Activated T-helper 1 cell treated with anti-CD3 and anti-CD28 coated beads, Interleukin-12 subunit alpha, Interleukin-12 subunit beta, Interleukin-2, Interleukin-4 antibody, amounts not matched to agents 30 ng/mL and 10 ng/mL and 1 ng/mL, durations not matched to agents 14 hours and 24 hours and 36 hours (primary cell): ENCODE measurements at regions of chr5 and their contacts with region 1.

Region 1: GRCh38 chr5:132495667-132496190 is 5.2 kb upstream of the IRF1 start:
- DNase-seq: peak; percentile 72
- H3K4me3 Mint-ChIP-seq: peak overlapping the region; percentile 93
- H3K27ac Mint-ChIP-seq: peak overlapping the region; percentile 90
- H3K4me1 Mint-ChIP-seq: peaks cover 80% of the 10 kb centered on the region
- H3K27me3 Mint-ChIP-seq: peaks cover 1% of the 10 kb centered on the region

Region 2: DNA sequence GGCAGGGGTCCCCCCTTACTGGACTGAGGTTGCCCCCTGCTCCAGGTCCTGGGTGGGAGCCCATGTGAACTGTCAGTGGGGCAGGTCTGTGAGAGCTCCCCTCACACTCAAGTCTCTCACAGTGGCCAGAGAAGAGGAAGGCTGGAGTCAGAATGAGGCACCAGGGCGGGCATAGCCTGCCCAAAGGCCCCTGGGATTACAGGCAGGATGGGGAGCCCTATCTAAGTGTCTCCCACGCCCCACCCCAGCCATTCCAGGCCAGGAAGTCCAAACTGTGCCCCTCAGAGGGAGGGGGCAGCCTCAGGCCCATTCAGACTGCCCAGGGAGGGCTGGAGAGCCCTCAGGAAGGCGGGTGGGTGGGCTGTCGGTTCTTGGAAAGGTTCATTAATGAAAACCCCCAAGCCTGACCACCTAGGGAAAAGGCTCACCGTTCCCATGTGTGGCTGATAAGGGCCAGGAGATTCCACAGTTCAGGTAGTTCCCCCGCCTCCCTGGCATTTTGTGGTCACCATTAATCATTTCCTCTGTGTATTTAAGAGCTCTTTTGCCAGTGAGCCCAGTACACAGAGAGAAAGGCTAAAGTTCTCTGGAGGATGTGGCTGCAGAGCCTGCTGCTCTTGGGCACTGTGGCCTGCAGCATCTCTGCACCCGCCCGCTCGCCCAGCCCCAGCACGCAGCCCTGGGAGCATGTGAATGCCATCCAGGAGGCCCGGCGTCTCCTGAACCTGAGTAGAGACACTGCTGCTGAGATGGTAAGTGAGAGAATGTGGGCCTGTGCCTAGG is 422.3 kb before region 1 on chr5 and contains the start of gene CSF2:
- intact Hi-C with region 1: loop called (anchors 5 kb)
- DNase-seq: no peak
- H3K4me3 Mint-ChIP-seq: peak within 1 kb of the TSS; percentile 90
- H3K27ac Mint-ChIP-seq: peak within 1 kb of the TSS; percentile 97
- H3K4me1 Mint-ChIP-seq: peaks cover 92% of the 10 kb centered on the region
- H3K27me3 Mint-ChIP-seq: peaks cover 1% of the 10 kb centered on the region
- total RNA-seq, gene CSF2: 1,648 and 1,678 TPM in 2 replicates

Region 3: GRCh38 chr5:132293066-132293991 is 202.4 kb before region 1 on chr5:
- intact Hi-C with region 1: loop called (anchors 2 kb)
- DNase-seq: peak; percentile 53
- H3K4me3 Mint-ChIP-seq: peak overlapping the region; percentile 93
- H3K27ac Mint-ChIP-seq: peak overlapping the region; percentile 75
- H3K4me1 Mint-ChIP-seq: peaks cover 30% of the 10 kb centered on the region
- H3K27me3 Mint-ChIP-seq: peaks cover 15% of the 10 kb centered on the region

Region 4: DNA sequence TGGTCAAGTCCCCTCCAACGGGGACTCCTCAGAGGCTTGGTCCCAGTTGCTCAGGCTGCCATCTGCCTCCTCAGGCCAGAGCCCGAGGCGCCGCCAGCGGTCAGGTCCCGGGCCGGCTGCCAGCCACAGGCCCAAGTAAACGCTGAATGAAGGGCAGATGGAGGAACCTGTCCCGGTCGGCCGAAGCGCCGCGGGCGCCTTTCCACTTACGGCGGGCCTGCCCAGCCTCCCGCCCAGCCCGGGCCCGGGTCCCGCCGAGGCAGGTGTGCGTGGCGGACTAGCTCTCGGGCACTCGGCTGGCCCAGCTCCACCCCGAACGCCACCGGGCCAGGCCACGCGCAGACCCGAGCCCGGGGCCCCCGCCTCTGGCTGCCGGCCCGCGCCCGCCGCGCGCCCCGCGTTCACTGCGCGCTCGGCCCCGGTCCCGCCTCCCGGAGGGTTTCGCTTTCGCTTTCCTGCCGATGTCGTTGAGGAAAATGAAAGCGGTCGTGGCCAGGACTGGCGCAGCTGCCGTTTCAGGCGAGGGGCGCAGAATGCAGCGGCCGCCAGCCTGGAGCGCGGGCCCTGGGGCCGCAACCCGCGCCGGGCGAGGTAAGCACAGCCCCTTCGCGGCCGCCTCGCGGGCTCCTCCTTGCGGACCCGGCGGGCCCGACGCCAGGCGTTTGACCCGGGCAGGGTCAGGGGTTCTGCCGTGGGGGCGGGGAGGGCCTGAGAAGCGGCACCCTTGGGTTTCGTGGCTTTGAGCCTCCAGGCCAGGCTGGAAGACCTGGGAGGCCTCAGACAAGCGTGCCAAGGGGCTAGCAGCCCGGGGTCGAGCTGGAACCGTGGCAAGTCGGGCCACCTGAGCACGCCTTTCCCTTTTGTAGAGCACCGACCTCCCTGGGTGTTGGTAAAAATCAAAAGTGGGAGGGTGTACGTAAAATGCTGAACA is 85.0 kb before region 1 on chr5:
- intact Hi-C with region 1: loop called (anchors 1 kb)
- DNase-seq: peak; percentile 90
- H3K4me3 Mint-ChIP-seq: peak overlapping the region; percentile 99
- H3K27ac Mint-ChIP-seq: peak overlapping the region; percentile 100
- H3K4me1 Mint-ChIP-seq: peaks cover 81% of the 10 kb centered on the region
- H3K27me3 Mint-ChIP-seq: no peaks in the 10 kb centered on the region

Region 5: GRCh38 chr5:132456296-132457001 is 39.3 kb before region 1 on chr5:
- intact Hi-C with region 1: loop called (anchors 1 kb)
- DNase-seq: peak; percentile 63
- H3K4me3 Mint-ChIP-seq: peak overlapping the region; percentile 69
- H3K27ac Mint-ChIP-seq: peak overlapping the region; percentile 99
- H3K4me1 Mint-ChIP-seq: peaks cover 94% of the 10 kb centered on the region
- H3K27me3 Mint-ChIP-seq: no peaks in the 10 kb centered on the region

Region 6: DNA sequence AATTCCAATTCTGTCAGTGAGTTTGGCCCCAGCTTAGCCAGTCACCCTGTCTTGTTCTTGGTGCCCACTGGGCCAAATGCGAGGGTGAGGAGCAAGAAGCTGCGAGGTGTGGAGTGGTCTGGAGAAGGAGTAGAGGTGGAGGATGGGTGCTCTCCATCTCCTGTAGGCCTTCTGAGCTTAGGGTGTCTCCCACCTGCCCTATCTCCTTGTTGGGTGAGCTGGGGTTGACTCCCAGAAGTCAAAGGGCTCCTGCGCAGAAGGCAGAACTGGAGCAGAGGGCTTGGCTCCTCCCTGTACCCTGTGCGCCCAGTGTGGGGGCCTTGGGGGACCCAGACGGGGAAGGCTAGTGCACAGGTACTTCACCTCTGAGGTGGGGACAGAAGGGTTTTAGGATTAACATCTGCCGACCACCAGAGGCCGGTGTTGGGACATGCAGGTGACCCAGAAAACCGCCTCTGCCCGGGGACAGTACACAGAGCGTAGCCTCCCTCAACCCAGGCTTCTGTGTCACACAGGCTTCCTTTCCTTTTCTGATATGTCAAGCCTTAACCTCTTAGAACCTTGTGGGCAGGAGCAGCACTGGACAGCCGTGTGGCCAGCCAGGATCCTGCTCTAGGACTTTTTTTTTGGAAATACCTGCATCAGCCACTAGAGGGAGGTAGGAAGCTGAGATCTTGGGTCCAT is 30.7 kb after region 1 on chr5:
- intact Hi-C with region 1: loop called (anchors 1 kb)
- DNase-seq: peak; percentile 48
- H3K4me3 Mint-ChIP-seq: no peak overlapping the region
- H3K27ac Mint-ChIP-seq: peak overlapping the region; percentile 26
- H3K4me1 Mint-ChIP-seq: peaks cover 64% of the 10 kb centered on the region
- H3K27me3 Mint-ChIP-seq: peaks cover under 1% of the 10 kb centered on the region